Motor neuron (in vitro differentiated cells): ENCODE measurements at regions of chr11 and their contacts with region 1.

Region 1: DNA sequence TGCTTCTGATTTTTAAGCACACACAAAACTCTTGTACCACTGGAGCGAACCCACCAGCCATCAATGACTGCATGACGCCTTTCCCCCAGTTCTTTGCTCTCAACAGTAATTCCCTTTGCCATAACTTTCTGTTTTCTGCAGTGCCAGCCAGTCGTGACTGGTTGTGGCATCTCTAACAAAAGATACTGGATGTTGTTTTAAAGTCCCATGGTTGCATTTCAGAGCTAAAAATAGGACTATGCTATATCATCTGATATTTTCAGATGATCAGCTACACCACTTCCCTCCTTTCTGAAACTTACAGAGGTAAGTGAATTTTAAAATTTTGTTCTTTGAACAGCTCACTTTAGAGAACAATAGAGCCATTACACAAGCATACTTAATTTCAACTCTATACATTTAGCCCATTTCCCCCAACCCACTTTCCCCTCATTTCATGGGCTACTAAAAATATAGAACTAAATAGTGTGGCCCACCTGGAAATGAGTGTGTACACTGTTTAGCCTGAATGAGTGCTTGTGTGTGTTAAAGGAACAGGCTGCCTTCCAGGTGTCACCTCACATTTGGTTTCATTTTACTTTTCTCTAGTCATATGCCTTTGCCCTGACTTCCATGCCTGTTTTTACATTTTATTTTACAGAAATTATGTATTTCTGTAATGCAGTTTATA is 136.9 kb upstream of the ZC3H12C start:
- ATAC-seq: peak in 1 of 8 experiments; percentile 28
- H3K4me3 ChIP-seq: no peak overlapping the region
- H3K27ac ChIP-seq: no peak overlapping the region
- H3K4me1 ChIP-seq: peaks cover 27 to 28% of the 10 kb centered on the region in 2 donors

Region 2: GRCh38 chr11:110077831-110078325 is 121.6 kb after region 1 on chr11:
- in situ Hi-C with region 1: loop called in 3 of 9 experiments (anchors 10 to 25 kb)
- ATAC-seq: peak in 7 of 8 experiments; percentile 56 to 92 (median 87)
- H3K4me3 ChIP-seq: no peak overlapping the region
- H3K27ac ChIP-seq: peak overlapping the region; percentile 46 to 51
- H3K4me1 ChIP-seq: peaks cover 29 to 30% of the 10 kb centered on the region in 2 donors